Posterior vena cava (tissue), 2 donors: ENCODE measurements at regions of chr17 and their contacts with region 1.

Region 1: GRCh38 chr17:82020891-82021727 is 1.6 kb downstream of the CENPX start:
- DNase-seq: no peak

Region 2: GRCh38 chr17:81959362-81960129 is 61.6 kb before region 1 on chr17:
- intact Hi-C with region 1: loop called (anchors 1 to 2 kb)
- DNase-seq: peak; percentile 89

Region 3: DNA sequence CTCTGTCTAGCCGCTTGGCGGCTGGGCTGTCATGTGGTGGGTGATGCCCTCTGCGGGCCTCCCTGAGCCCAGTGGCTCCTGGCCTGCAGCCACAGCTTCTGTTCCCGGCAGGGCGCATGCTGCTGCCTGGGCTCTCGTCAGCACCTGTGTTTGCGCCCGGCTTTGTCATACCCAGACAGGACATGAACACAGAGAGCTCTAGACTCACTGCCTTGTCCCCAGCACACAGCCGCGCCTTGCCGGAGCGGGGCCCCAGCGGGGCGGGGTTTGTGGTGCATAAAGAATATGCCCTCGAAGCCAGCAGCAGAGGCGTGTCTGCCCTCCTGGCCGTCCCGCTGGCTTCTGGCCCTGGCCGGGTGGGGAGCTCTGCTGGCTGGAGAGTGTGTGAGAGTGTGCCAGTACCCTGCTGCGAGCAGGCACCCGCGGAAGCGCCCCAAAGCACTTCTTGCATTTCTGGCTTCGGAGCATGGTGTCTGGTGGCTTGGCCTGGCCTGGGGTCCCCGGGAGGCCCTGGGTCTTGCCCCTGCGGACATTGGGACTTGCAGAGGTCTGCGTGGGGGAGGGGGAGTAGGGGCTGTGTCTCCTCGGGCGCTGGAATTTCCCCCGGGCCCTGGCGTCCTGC is 29.3 kb before region 1 on chr17:
- intact Hi-C with region 1: no loop called
- DNase-seq: no peak